Activated B cell treated with CpG ODN at 0.5 μM for 24 hours (primary cell): ENCODE measurements at regions of chr13 and their contacts with region 1.

Region 1: DNA sequence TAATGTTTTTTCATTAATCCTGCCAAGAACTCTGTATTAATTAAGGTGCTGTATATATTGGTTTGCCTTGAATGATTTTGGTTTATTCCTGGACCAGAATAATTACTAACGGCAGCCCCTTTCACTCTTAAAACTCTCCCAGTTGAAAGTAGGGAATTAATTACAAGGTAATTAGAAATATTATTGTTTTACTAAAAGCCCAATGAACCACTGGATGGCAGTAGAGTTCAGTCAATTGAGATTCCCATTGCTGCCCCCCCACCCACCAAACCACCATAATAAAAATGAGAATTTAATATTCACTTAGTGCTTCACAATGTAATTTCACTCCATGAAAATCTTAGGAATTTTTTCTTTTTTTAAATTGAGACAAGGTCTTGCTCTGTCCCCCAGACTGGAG is 13.7 kb downstream of the WBP4 start:
- DNase-seq: no peak
- ATAC-seq: peak; percentile 58
- H3K4me3 Mint-ChIP-seq: no peak overlapping the region
- H3K27ac Mint-ChIP-seq: no peak overlapping the region
- H3K4me1 Mint-ChIP-seq: no peaks in the 10 kb centered on the region
- H3K27me3 Mint-ChIP-seq: no peaks in the 10 kb centered on the region
- CTCF ChIP-seq: no peak

Region 2: GRCh38 chr13:40589285-40590109 is 485.5 kb before region 1 on chr13:
- CTCF ChIA-PET with region 1: no interaction called
- POLR2A ChIA-PET with region 1: no interaction called
- intact Hi-C with region 1: no loop called
- DNase-seq: no peak
- ATAC-seq: peak; percentile 89
- H3K4me3 Mint-ChIP-seq: peak overlapping the region; percentile 81
- H3K27ac Mint-ChIP-seq: peak overlapping the region; percentile 96
- H3K4me1 Mint-ChIP-seq: peaks cover 99% of the 10 kb centered on the region
- H3K27me3 Mint-ChIP-seq: no peaks in the 10 kb centered on the region
- CTCF ChIP-seq: no peak

Region 3: DNA sequence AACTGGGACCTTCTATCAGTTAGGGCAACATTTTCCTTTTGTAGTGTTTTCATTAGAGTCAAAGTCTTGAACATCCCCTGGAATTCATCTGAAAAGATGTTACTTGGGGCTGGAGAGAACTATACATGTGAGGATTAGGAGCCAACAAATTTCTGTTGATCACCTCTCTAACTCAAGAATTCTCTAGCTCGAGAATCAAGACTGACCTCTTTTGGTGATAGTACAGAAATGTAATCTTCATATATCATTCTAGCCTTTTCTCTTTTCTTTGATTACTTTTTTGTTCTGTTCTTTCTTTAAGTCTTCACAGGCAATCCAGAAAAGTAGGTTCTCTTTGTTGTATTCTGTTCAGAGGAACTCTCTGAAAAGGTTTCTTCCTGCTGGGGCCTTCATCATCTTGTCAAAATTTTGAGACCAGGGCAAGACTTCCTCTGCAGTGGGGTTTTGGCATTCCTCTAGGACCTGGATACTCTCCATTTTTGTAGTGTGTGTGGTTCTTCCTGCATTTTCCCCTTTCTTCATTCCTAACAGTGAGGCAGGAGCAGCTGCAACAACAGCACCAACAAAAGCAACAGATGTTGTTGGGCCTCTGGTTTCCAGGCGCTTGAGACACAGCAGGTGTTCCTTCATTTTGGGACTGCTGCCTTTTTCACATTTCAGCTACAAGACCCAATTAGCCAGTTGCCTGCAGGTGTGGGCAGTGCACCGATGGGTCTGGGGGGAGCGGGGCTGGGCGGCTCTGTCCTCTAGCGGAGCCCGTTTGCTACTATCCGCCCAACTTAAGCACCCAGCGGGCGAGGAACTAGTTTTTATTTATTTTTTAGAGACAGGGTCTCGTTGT is 82.1 kb before region 1 on chr13:
- CTCF ChIA-PET with region 1: no interaction called
- POLR2A ChIA-PET with region 1: no interaction called
- intact Hi-C with region 1: no loop called
- DNase-seq: no peak
- ATAC-seq: no peak
- H3K4me3 Mint-ChIP-seq: no peak overlapping the region
- H3K27ac Mint-ChIP-seq: peak overlapping the region; percentile 60
- H3K4me1 Mint-ChIP-seq: peaks cover 84% of the 10 kb centered on the region
- H3K27me3 Mint-ChIP-seq: no peaks in the 10 kb centered on the region
- CTCF ChIP-seq: no peak

Region 4: DNA sequence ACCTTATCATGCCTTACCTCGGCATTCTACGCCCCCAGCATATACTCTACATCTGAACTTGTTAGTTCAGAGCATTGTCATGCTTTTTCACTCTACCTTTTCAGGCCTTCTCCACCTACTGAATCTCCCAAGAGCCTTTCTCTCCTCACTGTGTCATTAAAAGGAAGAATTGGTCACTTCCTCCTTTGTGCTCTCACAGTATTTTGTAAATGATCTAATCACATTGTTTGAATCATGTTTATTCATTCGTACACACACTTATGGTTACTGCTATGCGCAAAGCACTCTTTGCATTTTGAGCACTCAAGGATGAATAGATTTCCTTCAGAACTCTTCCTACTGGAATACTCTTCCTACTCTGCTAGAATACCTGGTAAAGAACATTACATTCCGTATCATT is 40.2 kb before region 1 on chr13:
- CTCF ChIA-PET with region 1: no interaction called
- POLR2A ChIA-PET with region 1: no interaction called
- intact Hi-C with region 1: loop called (anchors 1 kb)
- DNase-seq: no peak
- ATAC-seq: peak; percentile 28
- H3K4me3 Mint-ChIP-seq: no peak overlapping the region
- H3K27ac Mint-ChIP-seq: no peak overlapping the region
- H3K4me1 Mint-ChIP-seq: peaks cover 22% of the 10 kb centered on the region
- H3K27me3 Mint-ChIP-seq: no peaks in the 10 kb centered on the region
- CTCF ChIP-seq: no peak

Region 5: GRCh38 chr13:41199526-41199925 is 124.5 kb after region 1 on chr13:
- CTCF ChIA-PET with region 1: interaction called, 4 read pairs
- POLR2A ChIA-PET with region 1: no interaction called
- intact Hi-C with region 1: loop called (anchors 1 kb)
- DNase-seq: no peak
- ATAC-seq: peak; percentile 90
- H3K4me3 Mint-ChIP-seq: peak overlapping the region; percentile 55
- H3K27ac Mint-ChIP-seq: peak overlapping the region; percentile 87
- H3K4me1 Mint-ChIP-seq: peaks cover 47% of the 10 kb centered on the region
- H3K27me3 Mint-ChIP-seq: no peaks in the 10 kb centered on the region
- CTCF ChIP-seq: no peak